Activated B cell treated with CpG ODN at 0.5 μM for 24 hours (primary cell): ENCODE measurements at regions of chr6 and their contacts with region 1.

Region 1: DNA sequence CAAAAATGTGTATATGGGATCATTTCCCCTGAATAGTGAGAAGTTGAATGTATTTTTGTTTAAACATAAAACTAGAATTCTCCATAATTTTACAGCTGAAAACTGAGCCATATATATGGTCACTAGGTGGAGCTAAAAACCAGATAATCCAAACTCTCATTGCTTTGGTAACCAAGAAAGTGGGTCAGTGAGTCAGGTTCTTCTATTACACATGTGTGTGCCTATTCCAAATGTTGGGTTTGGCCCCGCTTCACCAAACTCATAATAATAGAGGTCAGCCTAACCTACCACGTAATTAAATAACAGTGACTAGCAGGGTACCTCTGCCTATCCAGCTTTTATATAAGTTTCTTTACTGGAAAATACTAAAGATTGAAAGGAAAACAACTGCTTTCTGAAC is 19.3 kb upstream of the RNGTT start:
- DNase-seq: no peak
- ATAC-seq: peak; percentile 71
- H3K4me3 Mint-ChIP-seq: no peak overlapping the region
- H3K27ac Mint-ChIP-seq: no peak overlapping the region
- H3K4me1 Mint-ChIP-seq: no peaks in the 10 kb centered on the region
- H3K27me3 Mint-ChIP-seq: no peaks in the 10 kb centered on the region
- CTCF ChIP-seq: peak; percentile 87

Region 2: GRCh38 chr6:89122625-89123024 is 139.9 kb after region 1 on chr6:
- CTCF ChIA-PET with region 1: interaction called, 3 read pairs
- POLR2A ChIA-PET with region 1: no interaction called
- intact Hi-C with region 1: loop called (anchors 1 kb)
- DNase-seq: no peak
- ATAC-seq: peak; percentile 31
- H3K4me3 Mint-ChIP-seq: no peak overlapping the region
- H3K27ac Mint-ChIP-seq: no peak overlapping the region
- H3K4me1 Mint-ChIP-seq: no peaks in the 10 kb centered on the region
- H3K27me3 Mint-ChIP-seq: no peaks in the 10 kb centered on the region
- CTCF ChIP-seq: no peak

Region 3: GRCh38 chr6:89145787-89146646 is 163.3 kb after region 1 on chr6 and contains the start of gene PM20D2:
- CTCF ChIA-PET with region 1: interaction called, 6 read pairs
- POLR2A ChIA-PET with region 1: interaction called, 8 read pairs
- intact Hi-C with region 1: loop called (anchors 1 kb)
- DNase-seq: peak; percentile 72
- ATAC-seq: peak; percentile 78
- H3K4me3 Mint-ChIP-seq: peak within 1 kb of the TSS; percentile 90
- H3K27ac Mint-ChIP-seq: peak within 1 kb of the TSS; percentile 92
- H3K4me1 Mint-ChIP-seq: peaks cover 22% of the 10 kb centered on the region
- H3K27me3 Mint-ChIP-seq: no peaks in the 10 kb centered on the region
- CTCF ChIP-seq: no peak
- total RNA-seq, gene PM20D2: 10.9 and 11.6 TPM in 2 replicates

Region 4: DNA sequence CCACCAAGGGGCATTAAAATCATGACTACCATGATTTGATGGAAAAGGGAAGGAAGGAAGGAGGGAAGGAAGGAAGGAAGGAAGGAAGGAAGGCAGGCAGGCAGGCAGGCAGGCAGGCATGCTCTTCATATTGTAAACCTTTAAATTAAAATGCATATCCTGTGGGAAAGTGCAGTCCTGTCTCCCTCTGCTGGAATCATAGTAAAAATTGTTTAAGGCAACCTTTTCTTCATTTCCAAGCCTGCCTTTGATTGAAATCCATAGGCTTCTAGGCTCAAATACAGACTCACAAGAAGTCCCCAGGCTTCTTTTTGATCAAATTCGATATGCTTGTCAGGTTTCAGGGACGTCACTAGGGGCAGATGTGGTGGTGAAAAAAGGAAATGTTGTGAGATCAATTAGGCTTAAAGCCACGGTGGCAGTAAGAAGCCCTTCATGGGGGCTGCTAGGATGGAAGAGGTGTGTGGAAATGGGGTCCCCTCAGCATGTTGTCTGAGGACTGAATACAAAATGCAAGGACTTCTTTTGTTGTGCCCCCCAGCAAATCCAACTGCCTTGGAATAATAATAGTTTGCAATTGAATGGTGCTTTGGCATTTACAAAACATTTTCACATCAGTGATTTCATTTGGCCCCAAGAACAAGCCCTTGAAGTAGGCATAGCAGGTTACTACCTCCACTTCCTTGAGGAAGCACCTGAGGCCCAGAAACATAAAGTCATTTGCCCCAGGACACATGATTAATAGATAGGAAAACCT is 260.0 kb after region 1 on chr6:
- CTCF ChIA-PET with region 1: interaction called, 25 read pairs
- POLR2A ChIA-PET with region 1: no interaction called
- intact Hi-C with region 1: loop called (anchors 1 kb)
- DNase-seq: no peak
- ATAC-seq: no peak
- H3K4me3 Mint-ChIP-seq: no peak overlapping the region
- H3K27ac Mint-ChIP-seq: no peak overlapping the region
- H3K4me1 Mint-ChIP-seq: peaks cover 13% of the 10 kb centered on the region
- H3K27me3 Mint-ChIP-seq: peaks cover 13% of the 10 kb centered on the region
- CTCF ChIP-seq: no peak

Region 5: DNA sequence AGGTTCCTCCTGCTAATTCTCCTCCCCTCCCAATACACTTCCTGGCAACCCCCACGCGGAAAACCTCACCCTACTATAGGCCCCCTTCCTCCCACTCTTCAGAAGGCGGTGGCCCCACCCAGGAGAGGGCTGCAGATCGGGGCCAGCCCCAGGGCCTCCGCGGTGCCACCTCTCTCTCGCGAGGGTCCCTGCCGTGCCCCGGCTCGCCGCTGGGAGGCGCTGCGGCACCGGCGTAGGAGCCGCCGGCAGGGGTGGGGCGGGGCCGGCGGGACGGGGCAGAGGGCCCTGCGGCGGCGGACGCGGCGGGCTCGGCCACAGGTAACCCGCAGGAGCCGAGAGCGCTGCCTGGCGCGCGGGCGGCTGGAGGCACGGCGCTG is 450.1 kb after region 1 on chr6 and contains the start of gene ANKRD6:
- CTCF ChIA-PET with region 1: interaction called, 3 read pairs
- POLR2A ChIA-PET with region 1: no interaction called
- intact Hi-C with region 1: loop called (anchors 5 kb)
- DNase-seq: peak; percentile 95
- ATAC-seq: peak; percentile 97
- H3K4me3 Mint-ChIP-seq: peak within 1 kb of the TSS; percentile 86
- H3K27ac Mint-ChIP-seq: peak within 1 kb of the TSS; percentile 41
- H3K4me1 Mint-ChIP-seq: peaks cover 11% of the 10 kb centered on the region
- H3K27me3 Mint-ChIP-seq: peaks cover 4% of the 10 kb centered on the region
- CTCF ChIP-seq: no peak
- total RNA-seq, gene ANKRD6: 6.6 and 9.6 TPM in 2 replicates

Region 6: GRCh38 chr6:89610149-89610642 is 627.5 kb after region 1 on chr6:
- CTCF ChIA-PET with region 1: interaction called, 13 read pairs
- POLR2A ChIA-PET with region 1: no interaction called
- intact Hi-C with region 1: loop called (anchors 1 kb)
- DNase-seq: peak; percentile 67
- ATAC-seq: peak; percentile 81
- H3K4me3 Mint-ChIP-seq: no peak overlapping the region
- H3K27ac Mint-ChIP-seq: no peak overlapping the region
- H3K4me1 Mint-ChIP-seq: no peaks in the 10 kb centered on the region
- H3K27me3 Mint-ChIP-seq: no peaks in the 10 kb centered on the region
- CTCF ChIP-seq: peak; percentile 57